ENCODE measurements at regions of chr6 and their contacts with region 1.

Region 1: DNA sequence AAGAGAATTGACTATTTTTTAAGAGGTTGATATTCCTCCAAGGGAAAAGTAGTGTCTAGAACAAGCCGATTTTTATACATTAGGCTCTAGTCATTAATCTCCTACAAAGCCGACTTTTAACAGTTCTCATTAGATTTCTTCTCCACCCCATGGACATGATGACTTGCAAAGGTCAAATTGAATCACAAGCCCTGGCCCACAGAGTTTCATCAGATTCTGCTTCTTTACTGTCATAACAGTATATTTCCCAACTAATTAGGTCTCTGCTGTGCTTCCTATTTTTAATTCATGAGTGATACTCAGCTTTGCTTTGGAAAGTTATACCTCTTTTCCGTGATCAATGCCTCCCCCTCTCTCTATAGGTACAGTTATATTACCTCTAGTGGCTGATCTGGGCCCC is 90.6 kb upstream of the ADGRB3 start:
- DNase-seq: no peak
- ATAC-seq: no peak
- H3K4me3 ChIP-seq: no peak overlapping the region
- H3K4me3 Mint-ChIP-seq: no peak overlapping the region
- H3K27ac ChIP-seq: no peak overlapping the region
- H3K27ac Mint-ChIP-seq: no peak overlapping the region
- H3K4me1 ChIP-seq: no peaks in the 10 kb centered on the region
- H3K4me1 Mint-ChIP-seq: no peaks in the 10 kb centered on the region
- H3K27me3 ChIP-seq: no peaks in the 10 kb centered on the region
- H3K27me3 Mint-ChIP-seq: no peaks in the 10 kb centered on the region
- CTCF ChIP-seq: no peak

Region 2: GRCh38 chr6:68502946-68503345 is 41.5 kb before region 1 on chr6:
- CTCF ChIA-PET with region 1: no interaction called
- POLR2A ChIA-PET with region 1: no interaction called
- intact Hi-C with region 1: loop called in 1 of 2 experiments (anchors 1 kb)
- DNase-seq: no peak
- ATAC-seq: no peak
- H3K4me3 ChIP-seq: no peak overlapping the region
- H3K4me3 Mint-ChIP-seq: no peak overlapping the region
- H3K27ac ChIP-seq: no peak overlapping the region
- H3K27ac Mint-ChIP-seq: no peak overlapping the region
- H3K4me1 ChIP-seq: no peaks in the 10 kb centered on the region
- H3K4me1 Mint-ChIP-seq: no peaks in the 10 kb centered on the region
- H3K27me3 ChIP-seq: no peaks in the 10 kb centered on the region
- H3K27me3 Mint-ChIP-seq: no peaks in the 10 kb centered on the region
- CTCF ChIP-seq: no peak

Region 3: DNA sequence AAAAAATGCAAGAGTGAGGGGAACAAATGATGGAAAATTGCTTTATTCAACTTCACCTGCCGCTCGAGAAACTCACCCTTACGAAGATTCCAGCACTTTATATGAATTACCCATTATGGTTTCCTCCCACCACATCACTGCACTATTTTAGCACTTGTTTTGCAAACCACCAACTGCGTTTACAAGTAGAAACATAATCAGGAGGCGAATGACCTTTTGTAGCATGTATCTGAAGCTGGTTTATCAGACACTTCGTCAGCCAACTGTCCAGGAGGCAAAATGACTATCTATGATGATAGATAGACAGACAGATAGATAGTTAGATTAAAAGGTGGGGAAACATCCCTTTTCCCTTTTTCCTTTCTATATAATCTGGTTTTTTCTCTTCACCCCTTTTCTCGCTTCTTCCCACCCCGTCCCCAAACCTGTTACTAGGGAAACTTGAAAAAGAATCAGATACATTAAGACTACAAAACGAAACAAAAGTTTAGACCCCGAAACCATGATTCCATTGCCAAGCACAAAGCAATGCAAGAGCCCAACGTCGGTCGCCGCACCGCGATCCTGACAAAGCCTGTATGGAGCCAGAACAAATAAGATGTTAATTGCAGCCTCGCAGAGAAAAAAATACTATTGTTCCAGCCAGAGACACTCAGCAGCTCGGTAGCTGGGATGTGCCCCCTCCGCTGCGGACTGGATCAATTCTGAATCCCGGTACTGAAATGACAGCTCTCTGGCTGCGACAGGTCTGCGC is 89.7 kb after region 1 on chr6:
- CTCF ChIA-PET with region 1: no interaction called
- POLR2A ChIA-PET with region 1: no interaction called
- intact Hi-C with region 1: no loop called
- DNase-seq: no peak
- ATAC-seq: no peak
- H3K4me3 ChIP-seq: peak overlapping the region; percentile 5 to 12
- H3K4me3 Mint-ChIP-seq: peak overlapping the region; percentile 74
- H3K27ac ChIP-seq: no peak overlapping the region
- H3K27ac Mint-ChIP-seq: no peak overlapping the region
- H3K4me1 ChIP-seq: peaks cover 4% of the 10 kb centered on the region
- H3K4me1 Mint-ChIP-seq: peaks cover 20% of the 10 kb centered on the region
- H3K27me3 ChIP-seq: peaks cover 2 to 5% of the 10 kb centered on the region in 2 experiments
- H3K27me3 Mint-ChIP-seq: peaks cover 36% of the 10 kb centered on the region
- CTCF ChIP-seq: no peak

Measured in CD8-positive, alpha-beta T cell (primary cell).